Endothelial cell of umbilical vein (primary cell): ENCODE measurements at regions of chr7 and their contacts with region 1.

Region 1: GRCh38 chr7:106535234-106536026 is 125.5 kb downstream of the CCDC71L start:
- DNase-seq: no peak
- H3K4me3 ChIP-seq: no peak overlapping the region
- H3K27ac ChIP-seq: no peak overlapping the region
- H3K4me1 ChIP-seq: peaks cover 34% of the 10 kb centered on the region
- H3K27me3 ChIP-seq: no peaks in the 10 kb centered on the region
- CTCF ChIP-seq: no peak
- POLR2A ChIP-seq: no peak

Region 2: DNA sequence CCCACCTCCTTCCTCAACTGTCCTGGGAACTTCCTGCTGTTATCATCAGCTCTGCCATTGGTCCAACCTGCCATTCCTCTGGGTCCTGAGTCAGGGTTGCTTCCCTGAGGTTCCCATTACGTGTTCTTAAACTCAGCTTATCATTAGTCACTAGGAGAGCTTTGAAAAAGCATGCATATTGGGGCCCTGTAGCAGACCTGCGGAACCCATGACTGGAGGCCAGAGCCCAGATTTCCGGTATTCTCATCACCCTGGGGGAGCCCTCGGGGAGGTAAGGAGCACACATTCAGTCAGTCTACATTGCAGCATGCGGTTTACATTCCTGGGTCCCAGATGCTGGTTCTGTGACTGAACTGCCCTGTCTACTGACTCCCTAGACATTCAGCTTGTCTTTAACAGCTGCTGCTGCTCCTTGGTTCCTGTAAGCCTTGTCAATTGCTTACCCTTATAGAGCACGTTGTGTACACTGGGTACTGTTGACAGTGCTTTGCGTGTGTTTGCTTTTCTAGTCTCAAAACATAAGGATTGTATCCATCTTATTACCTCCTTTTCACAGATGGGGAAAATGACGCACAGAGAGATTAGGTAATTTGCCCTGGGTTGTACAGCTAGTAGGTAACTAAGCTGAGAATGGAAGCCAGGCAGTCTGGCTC is 559.5 kb before region 1 on chr7:
- CTCF ChIA-PET with region 1: no interaction called
- POLR2A ChIA-PET with region 1: no interaction called
- dilution Hi-C with region 1: no loop called
- intact Hi-C with region 1: no loop called
- DNase-seq: no peak
- H3K4me3 ChIP-seq: no peak overlapping the region
- H3K27ac ChIP-seq: no peak overlapping the region
- H3K4me1 ChIP-seq: no peaks in the 10 kb centered on the region
- H3K27me3 ChIP-seq: peaks cover 12% of the 10 kb centered on the region in 2 experiments
- CTCF ChIP-seq: no peak
- POLR2A ChIP-seq: no peak

Region 3: GRCh38 chr7:106216517-106216922 is 318.9 kb before region 1 on chr7:
- CTCF ChIA-PET with region 1: interaction called, 6 read pairs
- POLR2A ChIA-PET with region 1: no interaction called
- dilution Hi-C with region 1: no loop called
- intact Hi-C with region 1: loop called (anchors 1 kb)
- DNase-seq: peak; percentile 96
- H3K4me3 ChIP-seq: peak overlapping the region in 1 of 3 experiments; percentile 46
- H3K27ac ChIP-seq: peak overlapping the region; percentile 94
- H3K4me1 ChIP-seq: peaks cover 42% of the 10 kb centered on the region
- H3K27me3 ChIP-seq: no peaks in the 10 kb centered on the region
- CTCF ChIP-seq: no peak
- POLR2A ChIP-seq: peak; percentile 22

Region 4: DNA sequence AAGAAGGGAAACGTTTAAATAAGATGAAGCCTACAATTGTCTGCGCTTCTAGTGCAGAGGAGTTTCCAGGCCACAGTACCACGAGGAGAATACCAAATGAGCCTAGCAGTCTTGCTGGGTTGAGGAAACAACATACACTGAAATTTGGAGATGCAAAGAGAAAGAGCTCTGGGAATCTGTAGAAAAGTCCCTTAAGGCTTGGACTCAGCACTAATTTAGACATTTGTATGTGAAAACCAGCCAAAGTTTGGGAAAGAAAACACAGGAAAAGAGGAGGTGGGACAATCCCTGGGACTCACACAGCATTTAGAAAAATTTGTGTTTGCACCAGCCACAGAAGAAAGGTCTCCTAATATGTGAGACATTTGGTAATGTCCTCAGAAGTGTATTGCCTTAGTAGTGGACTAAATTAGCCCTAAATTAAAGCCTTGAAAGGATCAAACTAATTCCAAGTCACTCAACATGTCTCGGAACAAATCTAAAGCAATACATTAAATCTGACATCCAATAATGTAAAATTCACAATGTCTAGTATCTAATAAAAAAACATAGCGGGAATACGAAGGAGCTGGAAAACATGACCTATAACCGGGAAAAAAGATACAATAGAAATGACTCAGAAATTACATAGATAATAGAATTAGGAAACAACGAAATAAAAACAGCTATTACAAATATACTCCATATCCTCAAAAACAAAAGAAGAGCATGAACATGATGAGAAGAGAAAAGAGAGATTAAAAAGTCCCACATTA is 63.6 kb before region 1 on chr7:
- CTCF ChIA-PET with region 1: interaction called, 5 read pairs
- POLR2A ChIA-PET with region 1: no interaction called
- dilution Hi-C with region 1: no loop called
- intact Hi-C with region 1: loop called (anchors 2 kb)
- DNase-seq: peak; percentile 74
- H3K4me3 ChIP-seq: no peak overlapping the region
- H3K27ac ChIP-seq: peak overlapping the region; percentile 45
- H3K4me1 ChIP-seq: peaks cover 37% of the 10 kb centered on the region
- H3K27me3 ChIP-seq: no peaks in the 10 kb centered on the region
- CTCF ChIP-seq: no peak
- POLR2A ChIP-seq: no peak

Region 5: GRCh38 chr7:106717955-106718871 is 182.8 kb after region 1 on chr7:
- CTCF ChIA-PET with region 1: no interaction called
- POLR2A ChIA-PET with region 1: interaction called, 4 read pairs
- dilution Hi-C with region 1: no loop called
- intact Hi-C with region 1: loop called (anchors 1 kb)
- DNase-seq: peak; percentile 98
- H3K4me3 ChIP-seq: peak overlapping the region in 1 of 3 experiments; percentile 26
- H3K27ac ChIP-seq: peak overlapping the region; percentile 99
- H3K4me1 ChIP-seq: peaks cover 28% of the 10 kb centered on the region
- H3K27me3 ChIP-seq: no peaks in the 10 kb centered on the region
- CTCF ChIP-seq: no peak
- POLR2A ChIP-seq: peak; percentile 45

Region 6: GRCh38 chr7:106779877-106780276 is 244.4 kb after region 1 on chr7:
- CTCF ChIA-PET with region 1: no interaction called
- POLR2A ChIA-PET with region 1: interaction called, 7 read pairs
- dilution Hi-C with region 1: no loop called
- intact Hi-C with region 1: loop called (anchors 2 kb)
- DNase-seq: no peak
- H3K4me3 ChIP-seq: no peak overlapping the region
- H3K27ac ChIP-seq: no peak overlapping the region
- H3K4me1 ChIP-seq: peaks cover 16% of the 10 kb centered on the region
- H3K27me3 ChIP-seq: no peaks in the 10 kb centered on the region
- CTCF ChIP-seq: no peak
- POLR2A ChIP-seq: no peak

Region 7: DNA sequence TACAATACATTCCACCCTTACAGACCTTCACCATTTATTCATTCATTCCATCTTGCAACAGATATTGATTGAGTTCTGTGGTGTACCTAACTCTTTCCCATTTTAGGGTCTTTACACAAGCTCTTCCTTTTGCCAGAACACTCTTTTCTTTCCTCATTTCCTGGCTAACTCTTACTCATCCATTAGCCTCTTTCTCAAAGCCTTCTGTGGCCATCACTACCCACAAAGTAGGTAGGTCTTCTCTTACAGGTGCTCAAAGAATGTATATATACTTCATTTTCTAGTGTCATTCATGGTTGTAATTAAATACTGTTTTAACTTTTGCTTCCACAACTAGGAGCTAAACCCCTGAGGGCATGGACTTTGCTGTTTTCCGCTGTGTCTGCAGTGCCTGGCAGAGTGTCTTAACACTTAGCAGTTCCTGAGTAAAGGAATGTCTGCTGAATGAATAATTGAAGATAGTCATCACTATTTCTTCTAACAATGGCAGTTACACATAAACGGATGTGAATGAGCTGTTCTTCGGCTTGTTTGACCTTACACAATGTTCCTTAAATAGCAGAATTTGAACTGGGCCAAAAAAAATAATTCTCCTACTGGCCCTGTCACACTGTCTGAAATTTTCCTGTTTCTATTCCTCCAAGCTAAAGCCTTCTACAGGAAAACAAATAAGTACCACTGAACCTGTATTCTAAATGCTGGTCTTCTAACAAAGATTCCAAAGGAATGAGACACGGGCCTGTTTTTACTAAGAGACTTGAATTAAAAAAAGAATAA is 1059.7 kb after region 1 on chr7:
- CTCF ChIA-PET with region 1: no interaction called
- POLR2A ChIA-PET with region 1: no interaction called
- dilution Hi-C with region 1: no loop called
- intact Hi-C with region 1: loop called (anchors 5 kb)
- DNase-seq: peak; percentile 98
- H3K4me3 ChIP-seq: peak overlapping the region in 1 of 3 experiments; percentile 7
- H3K27ac ChIP-seq: peak overlapping the region; percentile 97
- H3K4me1 ChIP-seq: peaks cover 57% of the 10 kb centered on the region
- H3K27me3 ChIP-seq: no peaks in the 10 kb centered on the region
- CTCF ChIP-seq: no peak
- POLR2A ChIP-seq: no peak